Left cardiac atrium (tissue), 4 donors: ENCODE measurements at regions of chr16 and their contacts with region 1.

Region 1: GRCh38 chr16:87383629-87384161 is at the start of gene FBXO31:
- DNase-seq: peak; percentile 87
- ATAC-seq: peak; percentile 89 to 93
- total RNA-seq, gene FBXO31: 45.6 to 50.8 TPM

Region 2: DNA sequence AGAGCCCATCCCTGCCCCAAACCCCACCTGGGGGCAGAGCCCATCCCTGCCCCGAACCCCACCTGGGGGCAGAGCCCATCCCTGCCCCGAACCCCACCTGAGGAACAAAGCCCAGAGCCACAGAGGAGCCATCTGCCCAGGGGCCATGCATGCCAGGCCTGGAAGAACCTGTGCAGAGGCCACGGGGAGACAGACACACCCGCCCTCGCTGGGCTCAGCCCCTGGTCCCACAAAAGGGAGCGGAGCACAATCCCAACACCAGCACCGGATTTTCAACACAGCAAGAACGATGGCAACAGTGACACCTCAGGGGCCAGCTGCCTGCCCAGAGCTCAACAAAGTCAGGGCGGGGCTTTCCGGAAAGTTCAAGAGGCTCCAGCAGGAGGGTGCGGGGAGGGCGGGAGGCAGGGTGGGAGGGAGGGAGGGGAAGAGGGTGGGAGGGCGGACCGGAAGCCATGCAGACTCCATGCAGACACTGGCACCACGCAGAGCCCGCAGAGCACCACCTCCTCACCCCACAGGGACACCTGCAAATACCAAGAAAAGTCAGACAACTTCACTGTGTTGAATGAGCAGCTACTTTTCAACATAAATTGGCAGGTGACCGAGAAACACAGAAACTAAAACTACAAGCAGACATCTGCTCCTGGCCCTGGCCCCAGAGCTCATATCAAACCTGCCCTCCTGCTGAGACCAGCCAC is 38.6 kb before region 1 on chr16:
- intact Hi-C with region 1: loop called in 1 of 2 experiments (anchors 2 kb)
- DNase-seq: peak; percentile 75
- ATAC-seq: peak; percentile 69